H1 (cell line): ENCODE measurements at regions of chr19 and their contacts with region 1.

Region 1: DNA sequence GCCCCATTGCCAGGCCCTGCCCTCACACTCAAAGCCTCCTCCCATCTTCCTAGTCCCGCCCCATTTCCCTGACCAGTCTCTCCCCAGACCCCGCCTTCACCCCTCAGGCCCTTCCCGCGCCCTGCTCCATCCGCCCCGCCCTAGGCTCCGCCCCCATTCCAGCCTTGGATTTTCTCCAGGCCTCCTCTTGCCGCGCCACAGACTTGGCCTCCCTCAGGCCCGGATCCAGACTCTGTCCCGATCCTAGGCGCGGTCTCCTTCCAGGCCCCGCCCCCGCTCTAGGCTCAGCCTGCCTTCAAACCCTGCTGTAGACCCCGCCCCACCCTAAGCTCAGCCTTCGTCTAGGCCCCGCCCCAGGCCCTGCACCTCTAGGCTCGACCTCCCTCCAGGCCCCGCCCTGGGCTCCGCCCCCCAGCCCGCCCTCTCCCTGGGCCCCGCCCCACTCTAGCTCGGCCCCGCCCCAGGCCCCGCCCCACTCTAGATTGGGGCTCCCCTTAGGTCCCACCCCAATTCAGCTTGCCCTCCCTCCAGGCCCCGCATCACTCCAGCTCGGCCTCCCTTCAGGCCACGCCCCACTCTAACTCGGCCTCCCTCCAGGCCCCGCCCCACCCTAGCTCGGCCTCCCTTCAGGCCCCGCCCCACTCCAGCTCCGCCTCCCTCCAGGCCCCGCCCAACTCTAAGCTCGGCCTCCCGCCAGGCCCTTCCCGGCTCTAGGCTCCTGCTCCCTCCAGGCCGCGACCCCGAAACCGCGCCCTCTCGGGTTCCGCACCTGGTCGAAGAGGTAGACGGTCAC is 18.5 kb downstream of the LMTK3 start:
- DNase-seq: peak; percentile 95 to 98
- H3K4me3 ChIP-seq: peak overlapping the region; percentile 58 to 80 (median 66)
- H3K27ac ChIP-seq: peak overlapping the region; percentile 80; the same call in 1 of the 2 replicates
- H3K4me1 ChIP-seq: peaks cover 0 to 21% (median 15%) of the 10 kb centered on the region in 4 experiments; a peak in 6 of 7 replicates
- H3K27me3 ChIP-seq: peaks cover 0 to 3% (median 0%) of the 10 kb centered on the region in 4 experiments; a peak in 3 of 7 replicates
- CTCF ChIP-seq: no peak
- EP300 ChIP-seq: no peak
- POLR2A ChIP-seq: peak; percentile 39 to 53; a peak in 2 of 3 replicates
- RAD21 ChIP-seq: no peak

Region 2: GRCh38 chr19:48469289-48469881 is 23.7 kb before region 1 on chr19 and contains the start of gene CYTH2:
- CTCF ChIA-PET with region 1: interaction called, 8 read pairs
- POLR2A ChIA-PET with region 1: interaction called, 176 read pairs
- DNase-seq: peak; percentile 50 to 91
- H3K4me3 ChIP-seq: peak within 1 kb of the TSS; percentile 62 to 84 (median 80)
- H3K27ac ChIP-seq: peak within 1 kb of the TSS; percentile 90
- H3K4me1 ChIP-seq: peaks cover 0 to 9% (median 1%) of the 10 kb centered on the region in 4 experiments; a peak in 3 of 7 replicates
- H3K27me3 ChIP-seq: no peaks in the 10 kb centered on the region
- CTCF ChIP-seq: no peak
- EP300 ChIP-seq: peak in 1 of 2 experiments; percentile 80; a peak in 2 of 3 replicates
- POLR2A ChIP-seq: peak; percentile 90 to 97
- RAD21 ChIP-seq: no peak
- total RNA-seq, gene CYTH2: 67.7 and 71.4 TPM in 2 replicates

Region 3: GRCh38 chr19:48475369-48476068 is 17.6 kb before region 1 on chr19:
- CTCF ChIA-PET with region 1: interaction called, 18 read pairs
- POLR2A ChIA-PET with region 1: interaction called, 176 read pairs
- DNase-seq: no peak
- H3K4me3 ChIP-seq: no peak overlapping the region
- H3K27ac ChIP-seq: no peak overlapping the region
- H3K4me1 ChIP-seq: 0 out of 7 replicates have a peak, but pooled peaks cover 0 to 3% (median 0%) of the 10 kb centered on the region in 4 experiments
- H3K27me3 ChIP-seq: no peaks in the 10 kb centered on the region
- CTCF ChIP-seq: no peak
- EP300 ChIP-seq: no peak
- POLR2A ChIP-seq: peak in 1 of 2 experiments; percentile 32; a peak in 1 of 3 replicates
- RAD21 ChIP-seq: no peak

Region 4: GRCh38 chr19:48480558-48481500 is 12.3 kb before region 1 on chr19:
- CTCF ChIA-PET with region 1: interaction called, 18 read pairs
- POLR2A ChIA-PET with region 1: interaction called, 176 read pairs
- DNase-seq: no peak
- H3K4me3 ChIP-seq: peak overlapping the region in 1 of 4 experiments; percentile 29; a peak in 1 of 8 replicates
- H3K27ac ChIP-seq: no peak overlapping the region
- H3K4me1 ChIP-seq: peaks cover 0 to 1% (median 0%) of the 10 kb centered on the region in 4 experiments; a peak in 1 of 7 replicates
- H3K27me3 ChIP-seq: no peaks in the 10 kb centered on the region; a peak in 1 of 7 replicates
- CTCF ChIP-seq: no peak
- EP300 ChIP-seq: no peak
- POLR2A ChIP-seq: no peak; a peak in 1 of 3 replicates
- RAD21 ChIP-seq: no peak

Region 5: GRCh38 chr19:48560095-48560530 is 67.0 kb after region 1 on chr19:
- CTCF ChIA-PET with region 1: interaction called, 18 read pairs
- POLR2A ChIA-PET with region 1: interaction called, 3 read pairs
- DNase-seq: no peak
- H3K4me3 ChIP-seq: no peak overlapping the region
- H3K27ac ChIP-seq: no peak overlapping the region
- H3K4me1 ChIP-seq: peaks cover 0 to 7% (median 2%) of the 10 kb centered on the region in 4 experiments; a peak in 3 of 7 replicates
- H3K27me3 ChIP-seq: no peaks in the 10 kb centered on the region
- CTCF ChIP-seq: peak; percentile 35 to 63 (median 50)
- EP300 ChIP-seq: no peak
- POLR2A ChIP-seq: no peak
- RAD21 ChIP-seq: peak; percentile 82 to 88

Region 6: GRCh38 chr19:48608798-48609263 is 115.7 kb after region 1 on chr19:
- CTCF ChIA-PET with region 1: interaction called, 10 read pairs
- POLR2A ChIA-PET with region 1: interaction called, 14 read pairs
- DNase-seq: peak in 1 of 2 experiments; percentile 76
- H3K4me3 ChIP-seq: no peak overlapping the region
- H3K27ac ChIP-seq: no peak overlapping the region
- H3K4me1 ChIP-seq: peaks cover 0 to 6% (median 2%) of the 10 kb centered on the region in 4 experiments; a peak in 4 of 7 replicates
- H3K27me3 ChIP-seq: no peaks in the 10 kb centered on the region
- CTCF ChIP-seq: peak; percentile 78 to 87 (median 81)
- EP300 ChIP-seq: no peak
- POLR2A ChIP-seq: no peak
- RAD21 ChIP-seq: peak; percentile 77 to 87